ENCODE measurements at regions of chr19 and their contacts with region 1.

Region 1: DNA sequence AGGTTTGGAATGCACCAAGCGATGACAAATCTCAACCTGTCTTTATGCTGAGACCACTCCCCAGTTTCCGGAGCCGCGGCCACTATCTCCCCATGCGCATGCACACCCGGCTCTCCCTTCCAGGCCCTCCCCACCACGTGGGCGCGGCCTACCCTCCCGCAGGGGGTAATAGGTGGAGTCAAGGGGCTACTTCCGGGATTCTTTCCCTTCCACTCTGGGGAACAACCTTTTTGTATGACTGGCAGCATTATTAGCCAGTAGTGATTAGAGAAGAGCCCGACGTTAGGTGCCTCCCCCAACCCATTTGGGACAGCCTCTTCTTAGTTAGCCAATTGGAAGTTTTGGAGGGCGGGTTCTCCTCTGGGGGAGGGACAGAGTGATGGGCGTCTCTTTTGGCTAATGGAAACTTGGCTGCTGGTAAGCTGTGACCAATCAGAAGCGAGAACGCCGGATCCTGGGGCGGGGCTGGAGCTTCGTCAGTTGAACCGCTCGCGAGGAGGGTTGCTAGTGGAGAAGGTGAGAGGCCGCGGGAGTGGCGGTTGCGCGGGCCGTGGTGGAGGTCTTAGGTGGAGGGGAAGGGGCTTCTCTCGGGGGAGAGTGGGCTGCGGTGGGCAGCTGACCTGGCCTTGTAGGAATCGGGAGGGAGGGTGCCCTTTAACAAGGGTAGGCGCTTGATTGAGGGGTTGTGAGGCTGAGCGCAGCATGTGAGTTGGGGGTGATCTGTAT is at the start of gene CCDC61:
- DNase-seq: peak; percentile 99
- CTCF ChIP-seq: no peak

Region 2: DNA sequence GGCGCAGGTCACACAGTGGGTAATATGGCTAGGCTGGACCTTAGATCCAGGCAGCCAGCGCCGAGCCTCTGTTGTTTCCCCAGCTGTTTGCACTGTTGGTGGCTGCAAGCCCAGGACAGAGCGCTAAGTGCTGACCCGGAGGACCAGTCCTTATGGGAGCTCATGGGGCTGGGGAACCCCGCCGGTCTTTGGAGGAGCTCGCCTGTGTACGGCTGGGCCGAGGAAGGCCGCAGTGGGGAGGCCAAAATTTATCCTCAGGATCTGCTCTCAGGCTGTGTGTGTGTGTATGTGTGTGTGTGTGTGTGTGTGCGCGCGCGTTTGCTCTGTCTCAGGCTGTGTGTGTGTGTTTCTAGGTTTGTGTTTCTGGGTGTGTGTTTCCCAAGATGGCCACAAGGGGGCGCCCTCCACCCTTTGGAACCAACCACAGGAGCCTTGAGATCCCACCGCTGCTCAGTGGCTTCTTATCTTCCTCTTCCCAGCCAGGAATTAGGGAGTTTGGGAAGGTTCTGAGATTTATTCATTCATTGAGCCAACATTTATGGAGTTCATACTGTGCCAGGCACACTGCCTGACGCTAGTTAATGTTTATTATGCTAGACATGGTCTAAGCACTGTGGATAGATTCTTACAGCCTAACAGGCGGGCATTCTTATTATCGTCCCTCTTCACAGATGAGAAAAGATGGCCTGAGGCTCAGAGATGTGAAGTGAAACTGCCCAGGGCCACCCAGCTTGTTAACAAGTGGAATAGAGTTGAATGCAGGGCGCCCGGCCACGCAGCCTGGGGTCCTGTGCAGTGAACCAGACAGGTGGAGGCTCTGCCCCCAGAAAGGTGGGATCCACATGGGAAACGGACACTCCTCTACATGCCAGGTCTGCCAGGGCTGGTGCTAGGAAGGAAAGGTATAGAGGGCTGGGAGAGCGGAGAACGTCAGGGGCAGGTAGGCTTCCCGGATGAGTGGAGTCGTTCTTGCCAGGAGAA is 14.7 kb after region 1 on chr19:
- CTCF ChIA-PET with region 1: interaction called, 20 read pairs
- POLR2A ChIA-PET with region 1: interaction called, 3 read pairs
- DNase-seq: peak; percentile 75
- CTCF ChIP-seq: peak; percentile 80

Region 3: GRCh38 chr19:46022431-46023310 is 27.5 kb after region 1 on chr19 and contains the start of gene PGLYRP1:
- CTCF ChIA-PET with region 1: interaction called, 15 read pairs
- POLR2A ChIA-PET with region 1: no interaction called
- DNase-seq: no peak
- CTCF ChIP-seq: no peak